CD8-positive, alpha-beta T cell (primary cell): ENCODE measurements at regions of chr10 and their contacts with region 1.

Region 1: GRCh38 chr10:35195361-35196306 is 69.0 kb downstream of the CREM start:
- DNase-seq: peak; percentile 39 to 99 (median 73)
- ATAC-seq: peak; percentile 82
- H3K4me3 ChIP-seq: peak overlapping the region; percentile 45 to 50
- H3K4me3 Mint-ChIP-seq: peak overlapping the region; percentile 83
- H3K27ac ChIP-seq: peak overlapping the region; percentile 94 to 97
- H3K27ac Mint-ChIP-seq: peak overlapping the region; percentile 93
- H3K4me1 ChIP-seq: peaks cover 11% of the 10 kb centered on the region
- H3K4me1 Mint-ChIP-seq: peaks cover 22% of the 10 kb centered on the region
- H3K27me3 ChIP-seq: no peaks in the 10 kb centered on the region
- H3K27me3 Mint-ChIP-seq: no peaks in the 10 kb centered on the region
- CTCF ChIP-seq: peak; percentile 94

Region 2: GRCh38 chr10:35090162-35090954 is 105.3 kb before region 1 on chr10 and contains the start of gene CUL2:
- CTCF ChIA-PET with region 1: interaction called, 9 read pairs
- POLR2A ChIA-PET with region 1: interaction called, 5 read pairs
- intact Hi-C with region 1: loop called (anchors 1 kb)
- DNase-seq: peak; percentile 85 to 96 (median 92)
- ATAC-seq: peak; percentile 92
- H3K4me3 ChIP-seq: peak within 1 kb of the TSS; percentile 86 to 97
- H3K4me3 Mint-ChIP-seq: peak within 1 kb of the TSS; percentile 97
- H3K27ac ChIP-seq: peak within 1 kb of the TSS; percentile 94 to 99
- H3K27ac Mint-ChIP-seq: peak within 1 kb of the TSS; percentile 98
- H3K4me1 ChIP-seq: peaks cover 38% of the 10 kb centered on the region
- H3K4me1 Mint-ChIP-seq: peaks cover 50% of the 10 kb centered on the region
- H3K27me3 ChIP-seq: peaks cover 0 to 2% of the 10 kb centered on the region in 2 experiments
- H3K27me3 Mint-ChIP-seq: no peaks in the 10 kb centered on the region
- CTCF ChIP-seq: no peak
- total RNA-seq, gene CUL2: 43.8 to 47.1 TPM

Region 3: GRCh38 chr10:35126530-35127296 is 68.9 kb before region 1 on chr10 and contains the start of gene CREM:
- CTCF ChIA-PET with region 1: interaction called, 63 read pairs
- POLR2A ChIA-PET with region 1: interaction called, 62 read pairs
- intact Hi-C with region 1: loop called (anchors 1 kb)
- DNase-seq: peak; percentile 99 to 100 (median 99)
- ATAC-seq: peak; percentile 84
- H3K4me3 ChIP-seq: peak within 1 kb of the TSS; percentile 73 to 93
- H3K4me3 Mint-ChIP-seq: peak within 1 kb of the TSS; percentile 90
- H3K27ac ChIP-seq: peak within 1 kb of the TSS; percentile 98 to 100
- H3K27ac Mint-ChIP-seq: peak within 1 kb of the TSS; percentile 98
- H3K4me1 ChIP-seq: peaks cover 36% of the 10 kb centered on the region
- H3K4me1 Mint-ChIP-seq: peaks cover 40% of the 10 kb centered on the region
- H3K27me3 ChIP-seq: no peaks in the 10 kb centered on the region
- H3K27me3 Mint-ChIP-seq: no peaks in the 10 kb centered on the region
- CTCF ChIP-seq: peak; percentile 67
- total RNA-seq, gene CREM: 129 to 142 TPM

Region 4: GRCh38 chr10:35153716-35154479 is 41.7 kb before region 1 on chr10:
- CTCF ChIA-PET with region 1: interaction called, 3 read pairs
- POLR2A ChIA-PET with region 1: interaction called, 7 read pairs
- intact Hi-C with region 1: loop called in 1 of 2 experiments (anchors 5 kb)
- DNase-seq: no peak
- ATAC-seq: no peak
- H3K4me3 ChIP-seq: no peak overlapping the region
- H3K4me3 Mint-ChIP-seq: no peak overlapping the region
- H3K27ac ChIP-seq: no peak overlapping the region
- H3K27ac Mint-ChIP-seq: no peak overlapping the region
- H3K4me1 ChIP-seq: peaks cover 15% of the 10 kb centered on the region
- H3K4me1 Mint-ChIP-seq: peaks cover 21% of the 10 kb centered on the region
- H3K27me3 ChIP-seq: no peaks in the 10 kb centered on the region
- H3K27me3 Mint-ChIP-seq: no peaks in the 10 kb centered on the region
- CTCF ChIP-seq: no peak

Region 5: GRCh38 chr10:35212856-35213255 is 17.2 kb after region 1 on chr10:
- CTCF ChIA-PET with region 1: interaction called, 30 read pairs
- POLR2A ChIA-PET with region 1: interaction called, 4 read pairs
- intact Hi-C with region 1: loop called (anchors 1 to 2 kb)
- DNase-seq: no peak
- ATAC-seq: no peak
- H3K4me3 ChIP-seq: no peak overlapping the region
- H3K4me3 Mint-ChIP-seq: no peak overlapping the region
- H3K27ac ChIP-seq: no peak overlapping the region
- H3K27ac Mint-ChIP-seq: no peak overlapping the region
- H3K4me1 ChIP-seq: no peaks in the 10 kb centered on the region
- H3K4me1 Mint-ChIP-seq: peaks cover 8% of the 10 kb centered on the region
- H3K27me3 ChIP-seq: no peaks in the 10 kb centered on the region
- H3K27me3 Mint-ChIP-seq: no peaks in the 10 kb centered on the region
- CTCF ChIP-seq: no peak

Region 6: GRCh38 chr10:35336084-35336831 is 140.6 kb after region 1 on chr10 and contains the start of gene CCNY:
- CTCF ChIA-PET with region 1: no interaction called
- POLR2A ChIA-PET with region 1: no interaction called
- intact Hi-C with region 1: loop called (anchors 2 to 5 kb)
- DNase-seq: peak; percentile 56 to 83 (median 78)
- ATAC-seq: peak; percentile 86
- H3K4me3 ChIP-seq: peak within 1 kb of the TSS; percentile 77 to 78
- H3K4me3 Mint-ChIP-seq: peak within 1 kb of the TSS; percentile 88
- H3K27ac ChIP-seq: peak within 1 kb of the TSS; percentile 60 to 61
- H3K27ac Mint-ChIP-seq: peak within 1 kb of the TSS; percentile 86
- H3K4me1 ChIP-seq: peaks cover 52% of the 10 kb centered on the region
- H3K4me1 Mint-ChIP-seq: peaks cover 71% of the 10 kb centered on the region
- H3K27me3 ChIP-seq: no peaks in the 10 kb centered on the region
- H3K27me3 Mint-ChIP-seq: no peaks in the 10 kb centered on the region
- CTCF ChIP-seq: no peak
- total RNA-seq, gene CCNY: 75.3 to 77.3 TPM